ENCODE measurements at regions of chr15 and their contacts with region 1.

Region 1: DNA sequence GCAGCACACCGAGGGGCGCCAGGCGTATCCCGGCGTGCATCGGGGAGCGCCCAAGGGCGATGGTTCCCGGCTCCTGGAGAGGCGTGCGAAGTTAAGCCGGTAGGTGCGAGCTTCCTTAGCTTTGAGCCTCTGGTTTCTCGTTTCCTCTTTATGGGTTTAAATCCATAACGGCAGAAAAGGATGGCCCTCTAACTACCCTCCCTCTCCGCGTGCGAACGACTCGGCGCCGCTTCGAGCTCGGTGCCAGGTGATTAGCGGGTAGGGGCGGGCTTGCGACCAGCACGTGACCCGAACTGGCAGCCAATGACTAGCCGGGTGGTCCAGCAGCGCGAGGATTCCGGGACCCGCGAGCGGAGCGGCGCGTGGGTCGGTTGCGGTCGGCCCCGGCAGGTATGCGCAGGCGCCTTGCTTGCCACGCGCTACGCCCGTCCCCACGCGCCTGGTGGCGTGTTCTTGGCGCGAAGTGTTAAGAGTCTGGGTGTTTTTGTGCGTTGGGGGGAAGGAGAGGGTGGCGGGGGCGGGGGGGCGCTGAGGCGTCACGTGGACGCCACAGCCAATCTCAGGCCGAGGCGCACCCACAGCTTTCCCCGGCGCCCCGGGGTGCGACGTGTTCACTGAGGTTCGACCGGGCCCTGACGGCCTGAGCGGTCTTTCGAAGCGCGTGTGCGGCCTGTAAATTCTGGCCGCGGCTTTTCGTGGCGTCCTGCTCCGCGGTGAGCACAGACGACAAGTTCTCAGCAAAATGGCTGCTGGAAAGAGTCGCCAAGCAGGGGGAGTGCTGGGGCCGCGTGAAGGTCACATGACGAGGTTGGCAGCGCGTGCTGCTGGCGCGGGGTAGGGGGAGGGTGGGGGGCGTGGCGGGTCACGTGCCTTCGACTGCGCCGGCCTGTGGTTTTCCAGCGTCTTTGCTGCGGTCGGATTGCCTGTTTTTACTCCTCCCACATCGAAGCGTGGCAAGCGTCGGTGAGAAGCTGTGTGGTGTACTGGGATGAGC is 38.7 kb upstream of the MGA start:
- DNase-seq: peak; percentile 67
- H3K4me3 ChIP-seq: peak overlapping the region; percentile 45 to 59
- H3K27ac ChIP-seq: peak overlapping the region; percentile 66 to 73
- H3K4me1 ChIP-seq: no peaks in the 10 kb centered on the region
- H3K27me3 ChIP-seq: no peaks in the 10 kb centered on the region
- CTCF ChIP-seq: no peak
- POLR2A ChIP-seq: no peak

Region 2: DNA sequence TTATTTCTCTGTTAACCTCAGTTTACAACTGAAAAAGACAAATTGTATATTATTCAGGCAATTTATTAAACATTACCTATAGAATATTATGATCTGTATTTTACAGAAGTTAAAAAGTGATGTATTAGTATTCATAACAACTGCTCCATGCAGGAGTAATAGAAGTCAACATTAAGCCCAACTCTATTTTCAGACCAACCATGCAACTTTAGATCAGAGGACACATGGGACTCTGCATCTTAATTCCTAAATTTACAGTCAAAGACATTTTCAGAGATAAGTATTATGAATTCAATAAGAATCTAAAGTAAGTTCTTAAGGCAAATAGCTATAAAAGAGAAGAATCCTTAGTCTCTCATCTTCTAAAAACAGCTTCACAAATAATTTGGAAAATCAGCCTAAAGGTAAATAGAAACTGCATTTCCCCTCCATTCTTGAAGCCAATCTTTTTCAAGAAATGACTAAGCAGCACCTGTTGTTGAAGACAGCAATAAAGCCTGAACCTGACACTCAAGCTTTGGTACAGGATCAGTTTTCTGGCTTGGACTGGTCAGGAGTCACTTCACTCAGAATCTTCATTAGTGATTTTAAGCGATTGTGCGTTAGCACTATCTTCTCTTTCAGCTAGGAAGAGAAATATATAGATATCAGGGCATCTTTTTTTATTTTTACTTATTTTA is 312.1 kb before region 1 on chr15:
- intact Hi-C with region 1: no loop called
- DNase-seq: no peak
- H3K4me3 ChIP-seq: no peak overlapping the region
- H3K27ac ChIP-seq: no peak overlapping the region
- H3K4me1 ChIP-seq: no peaks in the 10 kb centered on the region
- H3K27me3 ChIP-seq: no peaks in the 10 kb centered on the region
- CTCF ChIP-seq: no peak
- POLR2A ChIP-seq: no peak

Region 3: DNA sequence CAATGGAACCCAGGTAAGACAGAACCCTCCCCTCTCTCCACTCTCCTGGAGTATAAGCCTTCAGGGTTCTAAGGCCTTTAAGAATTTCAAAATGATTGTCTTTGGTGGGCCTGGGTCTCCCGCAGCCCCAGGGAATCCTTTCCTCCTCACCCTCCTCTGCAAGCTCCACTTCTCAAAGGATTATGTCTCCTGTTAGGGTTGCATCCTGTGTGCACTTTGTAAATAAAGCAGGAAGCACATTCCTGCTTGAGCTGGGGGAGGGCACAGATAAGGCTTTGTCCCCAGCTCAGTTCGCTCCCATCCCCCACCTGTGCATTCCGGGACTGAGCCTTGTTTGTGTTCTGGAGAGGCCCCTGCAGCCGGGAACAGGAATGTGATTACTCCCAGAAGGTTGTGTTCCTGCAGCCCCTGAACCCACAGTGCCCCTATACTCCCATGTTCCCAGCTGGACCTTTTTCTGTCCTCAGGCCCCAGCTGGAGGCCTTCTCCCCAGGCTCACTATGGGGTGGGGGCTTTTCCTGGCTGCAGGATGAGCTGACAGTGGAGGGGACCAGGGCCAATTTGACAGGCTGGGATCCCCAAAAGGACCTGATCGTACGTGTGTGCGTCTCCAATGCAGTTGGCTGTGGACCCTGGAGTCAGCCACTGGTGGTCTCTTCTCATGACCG is 53.0 kb before region 1 on chr15:
- intact Hi-C with region 1: no loop called
- DNase-seq: no peak
- H3K4me3 ChIP-seq: no peak overlapping the region
- H3K27ac ChIP-seq: no peak overlapping the region
- H3K4me1 ChIP-seq: no peaks in the 10 kb centered on the region
- H3K27me3 ChIP-seq: no peaks in the 10 kb centered on the region
- CTCF ChIP-seq: no peak
- POLR2A ChIP-seq: no peak

Region 4: DNA sequence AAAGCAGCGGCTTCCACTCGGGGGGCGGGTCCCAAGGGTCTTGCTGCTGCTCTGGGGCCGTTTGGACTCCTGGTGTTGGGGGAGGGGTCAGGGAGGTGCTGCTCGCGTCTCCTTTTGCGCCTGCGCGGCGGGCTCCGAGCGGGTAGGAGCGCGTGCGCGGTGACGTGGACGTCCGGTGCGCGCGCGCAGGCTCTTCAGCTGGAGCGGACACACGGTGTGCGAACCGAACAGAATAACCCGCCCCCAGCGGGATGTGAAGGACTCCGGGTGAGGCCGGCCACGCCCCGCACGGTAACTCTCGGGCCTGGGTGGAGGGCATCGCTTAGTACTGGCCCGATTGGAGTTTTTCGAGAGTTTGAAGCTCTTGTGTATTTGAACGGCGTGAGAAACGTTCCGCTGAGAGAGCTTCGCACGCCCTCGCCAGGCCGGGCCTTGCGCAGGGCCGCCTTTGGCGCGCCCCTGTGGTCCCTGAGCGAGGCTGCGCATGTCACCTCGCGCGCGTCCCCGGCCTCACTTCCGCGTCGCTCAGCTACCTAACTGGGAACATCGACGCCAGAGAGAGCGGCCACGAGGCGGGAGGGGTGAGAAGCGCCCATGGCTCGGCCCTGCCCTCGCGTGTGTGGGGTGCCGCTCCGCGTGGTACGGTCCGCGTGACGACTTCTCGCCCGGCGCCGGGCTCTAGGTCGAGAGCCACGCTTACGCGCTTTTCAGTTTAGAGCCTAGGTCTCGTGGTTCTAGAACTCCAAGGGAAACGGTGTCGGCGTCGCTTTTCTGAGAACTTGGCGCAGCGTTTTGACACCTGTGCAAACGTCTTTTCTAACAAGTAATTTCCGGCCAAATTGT is 39.0 kb after region 1 on chr15 and contains the start of gene MGA:
- intact Hi-C with region 1: loop called (anchors 5 kb)
- DNase-seq: peak; percentile 80
- H3K4me3 ChIP-seq: peak within 1 kb of the TSS; percentile 38 to 50
- H3K27ac ChIP-seq: peak within 1 kb of the TSS; percentile 75 to 82
- H3K4me1 ChIP-seq: no peaks in the 10 kb centered on the region
- H3K27me3 ChIP-seq: no peaks in the 10 kb centered on the region
- CTCF ChIP-seq: peak in 2 of 4 experiments; percentile 16 to 29
- POLR2A ChIP-seq: peak; percentile 33
- total RNA-seq, gene MGA: 42.9 to 62.5 TPM

Region 5: GRCh38 chr15:41860049-41860828 is 238.7 kb after region 1 on chr15:
- intact Hi-C with region 1: no loop called
- DNase-seq: no peak
- H3K4me3 ChIP-seq: no peak overlapping the region
- H3K27ac ChIP-seq: no peak overlapping the region
- H3K4me1 ChIP-seq: no peaks in the 10 kb centered on the region
- H3K27me3 ChIP-seq: no peaks in the 10 kb centered on the region
- CTCF ChIP-seq: no peak
- POLR2A ChIP-seq: no peak

Measured in prostate gland (tissue), 2 donors.